Common myeloid progenitor, CD34-positive (primary cell): ENCODE measurements at regions of chr11 and their contacts with region 1.

Region 1: DNA sequence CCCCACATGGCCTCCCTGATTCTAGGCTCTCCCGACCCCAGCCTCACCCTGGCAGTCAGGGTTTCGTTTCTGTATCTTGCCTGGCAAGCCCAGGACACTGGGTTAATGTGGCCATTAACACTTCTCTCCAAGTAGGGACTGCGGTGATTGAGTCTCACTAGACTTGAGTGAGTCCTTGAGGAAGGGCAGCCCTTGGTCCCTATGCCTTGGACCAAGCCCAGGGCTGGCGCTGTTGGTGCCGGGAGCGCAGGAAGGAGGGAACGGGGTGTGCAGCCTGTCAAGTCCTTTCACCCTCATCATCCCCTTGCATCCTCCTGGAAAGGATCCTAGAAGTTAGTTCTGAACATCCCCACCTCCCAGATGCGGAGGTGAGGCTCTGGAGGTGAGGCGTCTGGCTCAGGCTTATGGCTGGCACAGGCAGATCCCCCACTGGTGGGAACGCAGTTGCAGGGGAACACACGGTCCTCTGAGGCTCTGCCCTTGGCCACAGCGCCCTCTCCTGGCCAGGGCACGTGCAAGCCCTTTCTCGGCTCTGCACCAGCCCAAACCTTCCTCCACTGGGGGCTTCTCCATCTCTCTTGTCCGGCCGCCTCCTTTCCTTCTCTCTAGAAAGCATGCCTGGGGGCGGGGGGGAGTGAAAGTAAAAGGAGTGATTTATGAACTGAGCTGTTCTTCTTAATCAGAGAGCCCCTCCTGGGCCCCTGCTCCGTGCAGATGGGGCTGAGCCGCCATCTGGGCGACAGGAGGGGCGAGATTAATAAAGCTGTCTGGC is 56.7 kb downstream of the TP53I11 start:
- DNase-seq: peak; percentile 76 to 86 (median 82)
- H3K4me3 ChIP-seq: no peak overlapping the region
- H3K27ac ChIP-seq: no peak overlapping the region
- H3K4me1 ChIP-seq: no peaks in the 10 kb centered on the region
- H3K27me3 ChIP-seq: peaks cover 0 to 7% (median 2%) of the 10 kb centered on the region in 5 experiments

Region 2: GRCh38 chr11:44747316-44747715 is 146.7 kb before region 1 on chr11:
- CTCF ChIA-PET with region 1: no interaction called
- POLR2A ChIA-PET with region 1: no interaction called
- DNase-seq: no peak
- H3K4me3 ChIP-seq: no peak overlapping the region
- H3K27ac ChIP-seq: no peak overlapping the region
- H3K4me1 ChIP-seq: no peaks in the 10 kb centered on the region
- H3K27me3 ChIP-seq: peaks cover 0 to 6% (median 0%) of the 10 kb centered on the region in 5 experiments

Region 3: GRCh38 chr11:44842220-44842619 is 51.8 kb before region 1 on chr11:
- CTCF ChIA-PET with region 1: no interaction called
- POLR2A ChIA-PET with region 1: no interaction called
- DNase-seq: no peak
- H3K4me3 ChIP-seq: no peak overlapping the region
- H3K27ac ChIP-seq: no peak overlapping the region
- H3K4me1 ChIP-seq: no peaks in the 10 kb centered on the region
- H3K27me3 ChIP-seq: no peaks in the 10 kb centered on the region

Region 4: GRCh38 chr11:44905131-44905866 is 11.3 kb after region 1 on chr11:
- CTCF ChIA-PET with region 1: interaction called, 21 read pairs
- POLR2A ChIA-PET with region 1: no interaction called
- DNase-seq: no peak
- H3K4me3 ChIP-seq: no peak overlapping the region
- H3K27ac ChIP-seq: no peak overlapping the region
- H3K4me1 ChIP-seq: no peaks in the 10 kb centered on the region
- H3K27me3 ChIP-seq: peaks cover 0 to 3% (median 0%) of the 10 kb centered on the region in 5 experiments